Gastrocnemius medialis (tissue), 4 donors: ENCODE measurements at regions of chr16 and their contacts with region 1.

Region 1: DNA sequence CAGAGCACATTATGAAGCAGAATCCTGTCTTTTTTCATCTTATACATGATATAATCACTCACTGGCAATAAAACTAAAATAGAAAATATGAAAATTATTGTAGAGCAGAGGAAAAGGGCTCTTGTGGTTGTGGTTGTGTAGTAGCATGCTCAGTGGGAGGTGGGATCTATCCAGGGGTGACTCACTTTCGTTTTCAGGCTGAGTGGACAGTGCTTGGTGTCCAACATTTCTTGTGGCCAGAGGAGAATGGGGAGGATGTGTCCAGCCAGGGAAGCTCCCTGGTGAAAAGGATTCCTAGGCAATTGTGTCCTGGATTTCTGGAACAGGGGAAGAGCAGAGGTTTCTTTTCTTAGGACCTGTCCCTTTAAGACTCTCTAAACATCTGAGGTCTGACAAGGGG is 31.9 kb upstream of the CPHXL start:
- DNase-seq: no peak
- ATAC-seq: no peak
- H3K4me3 ChIP-seq: no peak overlapping the region
- H3K27ac ChIP-seq: no peak overlapping the region
- H3K4me1 ChIP-seq: no peaks in the 10 kb centered on the region
- H3K27me3 ChIP-seq: no peaks in the 10 kb centered on the region
- CTCF ChIP-seq: no peak
- POLR2A ChIP-seq: no peak

Region 2: DNA sequence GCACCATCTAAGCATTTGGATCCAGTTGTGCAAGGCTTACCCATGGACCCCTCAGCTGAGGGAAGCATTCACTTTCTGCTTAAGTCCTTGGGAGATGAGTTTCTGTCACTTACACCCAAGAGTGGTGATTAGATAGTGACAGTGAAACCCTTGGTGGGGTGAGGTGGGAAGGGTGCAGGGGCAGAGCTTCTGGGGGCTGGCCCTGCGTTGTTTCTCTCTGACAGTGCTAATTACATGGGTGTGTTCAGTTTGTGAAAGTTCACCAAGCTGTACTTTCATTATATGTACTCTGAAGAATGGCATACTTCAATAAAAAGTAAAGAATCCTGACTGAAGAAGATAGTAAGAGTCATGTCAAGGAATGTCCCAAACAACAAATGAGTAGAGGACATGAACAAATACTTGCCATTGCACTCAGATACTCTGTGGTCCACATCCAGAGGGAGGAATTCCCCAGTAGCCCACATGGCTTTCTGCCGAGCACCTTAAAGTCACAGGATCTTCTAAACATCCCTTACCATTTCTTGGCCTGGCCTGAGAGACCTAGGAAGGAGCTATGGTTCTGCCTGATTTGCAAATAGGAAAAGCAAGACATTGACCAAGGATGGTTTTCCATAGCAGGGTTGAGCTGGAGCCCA is 271.4 kb before region 1 on chr16:
- in situ Hi-C with region 1: loop called in 1 of 4 experiments (anchors 10 kb)
- intact Hi-C with region 1: no loop called
- DNase-seq: no peak
- ATAC-seq: no peak
- H3K4me3 ChIP-seq: no peak overlapping the region
- H3K27ac ChIP-seq: no peak overlapping the region
- H3K4me1 ChIP-seq: peaks cover 6 to 7% of the 10 kb centered on the region in 2 donors
- H3K27me3 ChIP-seq: no peaks in the 10 kb centered on the region
- CTCF ChIP-seq: no peak
- POLR2A ChIP-seq: no peak

Region 3: GRCh38 chr16:75801307-75801706 is 43.1 kb after region 1 on chr16:
- in situ Hi-C with region 1: no loop called
- intact Hi-C with region 1: no loop called
- DNase-seq: no peak
- ATAC-seq: no peak
- H3K4me3 ChIP-seq: no peak overlapping the region
- H3K27ac ChIP-seq: no peak overlapping the region
- H3K4me1 ChIP-seq: no peaks in the 10 kb centered on the region
- H3K27me3 ChIP-seq: no peaks in the 10 kb centered on the region
- CTCF ChIP-seq: no peak
- POLR2A ChIP-seq: no peak